Left ventricle myocardium inferior (tissue), 1 donor: ENCODE measurements at regions of chr2 and their contacts with region 1.

Region 1: GRCh38 chr2:237512774-237513466 is 25.9 kb downstream of the MLPH start:
- DNase-seq: peak; percentile 89
- H3K4me3 ChIP-seq: no peak overlapping the region
- H3K27ac ChIP-seq: peak overlapping the region; percentile 92
- H3K4me1 ChIP-seq: peaks cover 80% of the 10 kb centered on the region
- H3K27me3 ChIP-seq: no peaks in the 10 kb centered on the region
- CTCF ChIP-seq: peak; percentile 89

Region 2: DNA sequence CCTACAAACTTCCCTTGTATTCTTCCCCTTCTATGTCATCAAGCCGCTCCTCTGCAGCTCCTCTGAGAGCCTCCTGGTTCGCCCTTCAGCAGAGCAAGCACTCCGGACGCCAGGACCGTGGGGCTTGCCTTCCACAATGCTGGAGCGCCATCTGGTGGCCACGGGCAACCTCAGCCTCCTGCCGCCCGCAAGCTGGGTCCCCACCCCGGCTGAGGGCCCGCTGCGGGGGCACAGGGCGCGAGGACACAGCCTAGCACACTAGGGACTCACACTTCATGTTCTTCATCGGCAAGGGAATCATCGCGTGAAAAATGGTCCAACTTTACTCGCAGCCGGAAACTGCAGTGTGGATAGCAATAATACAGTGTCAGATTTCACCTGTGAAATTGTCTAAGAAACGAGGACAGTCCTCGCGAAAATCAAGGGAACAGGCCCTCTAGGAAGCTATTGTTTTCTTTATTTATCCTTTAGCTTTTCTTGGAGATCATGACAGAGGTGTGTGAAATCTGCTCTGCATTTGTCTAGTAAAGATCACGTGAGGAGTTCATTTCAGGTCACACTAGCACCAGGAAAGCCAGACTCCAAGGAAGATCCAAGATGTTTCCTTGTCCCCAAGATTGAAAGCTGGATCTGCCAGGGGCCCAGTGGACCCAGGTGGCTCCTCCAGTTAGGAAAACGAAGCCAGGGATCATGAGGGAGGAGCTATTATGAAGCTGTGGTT is 59.3 kb after region 1 on chr2:
- intact Hi-C with region 1: loop called (anchors 5 kb)
- DNase-seq: peak; percentile 88
- H3K4me3 ChIP-seq: peak overlapping the region; percentile 32
- H3K27ac ChIP-seq: no peak overlapping the region
- H3K4me1 ChIP-seq: peaks cover 30% of the 10 kb centered on the region
- H3K27me3 ChIP-seq: no peaks in the 10 kb centered on the region
- CTCF ChIP-seq: peak; percentile 99